Mammary epithelial cell (primary cell): ENCODE measurements at regions of chr3 and their contacts with region 1.

Region 1: DNA sequence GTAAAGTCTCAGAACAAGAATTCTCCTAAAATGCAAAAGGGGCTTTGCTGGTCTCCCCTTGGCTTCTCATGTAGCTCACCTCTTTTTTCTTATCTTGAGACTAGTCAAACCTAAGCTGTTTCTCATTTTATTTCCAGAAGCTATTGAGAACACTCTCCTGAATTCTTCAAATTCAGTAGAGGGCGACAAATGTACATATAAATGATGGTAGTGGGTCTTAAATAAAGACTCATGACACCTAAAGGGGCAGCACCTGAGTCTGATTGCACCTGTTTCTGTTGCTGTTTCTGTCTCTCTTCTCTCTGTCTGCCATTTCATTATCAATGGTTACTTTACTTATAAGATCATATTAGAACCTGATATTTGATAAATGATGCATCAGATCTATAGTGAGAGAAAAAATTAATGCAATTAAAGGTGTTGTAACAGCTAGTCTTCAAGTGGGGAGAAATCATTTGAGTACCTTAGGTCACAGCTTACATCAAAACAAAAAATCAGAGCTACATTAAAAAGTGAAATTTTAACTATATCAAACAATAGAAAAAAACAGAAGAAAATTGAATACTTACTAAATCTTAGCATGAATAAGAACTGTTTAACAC is 7.0 kb downstream of the ADIPOQ start:
- DNase-seq: peak; percentile 45
- H3K4me3 ChIP-seq: no peak overlapping the region
- H3K27ac ChIP-seq: no peak overlapping the region
- H3K4me1 ChIP-seq: no peaks in the 10 kb centered on the region
- H3K27me3 ChIP-seq: peaks cover 2% of the 10 kb centered on the region
- CTCF ChIP-seq: peak; percentile 50 to 54

Region 2: DNA sequence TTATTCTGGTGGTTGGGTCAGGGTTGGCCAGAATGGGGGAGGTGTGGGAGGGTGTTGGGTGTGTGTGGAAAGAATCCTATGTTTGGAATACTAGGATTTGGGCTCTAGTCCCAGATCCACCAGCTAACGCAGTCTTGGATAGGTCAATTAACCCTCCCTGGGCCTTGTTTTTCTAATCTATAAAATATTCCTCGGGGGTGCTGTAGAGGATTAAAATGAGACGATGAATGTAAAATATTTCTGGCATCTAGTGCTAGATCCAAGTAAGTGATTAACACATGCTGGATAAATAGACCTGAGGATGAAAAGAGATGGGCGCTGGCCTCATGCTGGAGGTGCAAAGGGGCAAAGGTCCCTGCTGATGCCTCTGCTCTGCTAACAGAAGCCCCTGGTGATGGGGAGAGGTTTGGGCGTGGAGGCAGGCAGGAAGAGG is 672.9 kb before region 1 on chr3:
- CTCF ChIA-PET with region 1: no interaction called
- dilution Hi-C with region 1: no loop called
- in situ Hi-C with region 1: no loop called
- intact Hi-C with region 1: no loop called
- DNase-seq: no peak
- H3K4me3 ChIP-seq: no peak overlapping the region
- H3K27ac ChIP-seq: no peak overlapping the region
- H3K4me1 ChIP-seq: no peaks in the 10 kb centered on the region
- H3K27me3 ChIP-seq: no peaks in the 10 kb centered on the region
- CTCF ChIP-seq: no peak

Region 3: GRCh38 chr3:186570096-186570940 is 279.2 kb before region 1 on chr3 and contains the start of gene DNAJB11:
- CTCF ChIA-PET with region 1: no interaction called
- dilution Hi-C with region 1: no loop called
- in situ Hi-C with region 1: no loop called
- intact Hi-C with region 1: no loop called
- DNase-seq: peak; percentile 100
- H3K4me3 ChIP-seq: peak within 1 kb of the TSS; percentile 66 to 93 (median 69)
- H3K27ac ChIP-seq: peak within 1 kb of the TSS; percentile 87
- H3K4me1 ChIP-seq: peaks cover 25% of the 10 kb centered on the region
- H3K27me3 ChIP-seq: no peaks in the 10 kb centered on the region
- CTCF ChIP-seq: no peak
- total RNA-seq, gene DNAJB11: 27.0 to 70.8 TPM

Region 4: GRCh38 chr3:186920301-186920700 is 70.8 kb after region 1 on chr3:
- CTCF ChIA-PET with region 1: no interaction called
- dilution Hi-C with region 1: no loop called
- in situ Hi-C with region 1: loop called in 1 of 2 experiments (anchors 10 kb)
- intact Hi-C with region 1: loop called (anchors 2 kb)
- DNase-seq: no peak
- H3K4me3 ChIP-seq: no peak overlapping the region
- H3K27ac ChIP-seq: no peak overlapping the region
- H3K4me1 ChIP-seq: peaks cover 29% of the 10 kb centered on the region
- H3K27me3 ChIP-seq: no peaks in the 10 kb centered on the region
- CTCF ChIP-seq: no peak

Region 5: DNA sequence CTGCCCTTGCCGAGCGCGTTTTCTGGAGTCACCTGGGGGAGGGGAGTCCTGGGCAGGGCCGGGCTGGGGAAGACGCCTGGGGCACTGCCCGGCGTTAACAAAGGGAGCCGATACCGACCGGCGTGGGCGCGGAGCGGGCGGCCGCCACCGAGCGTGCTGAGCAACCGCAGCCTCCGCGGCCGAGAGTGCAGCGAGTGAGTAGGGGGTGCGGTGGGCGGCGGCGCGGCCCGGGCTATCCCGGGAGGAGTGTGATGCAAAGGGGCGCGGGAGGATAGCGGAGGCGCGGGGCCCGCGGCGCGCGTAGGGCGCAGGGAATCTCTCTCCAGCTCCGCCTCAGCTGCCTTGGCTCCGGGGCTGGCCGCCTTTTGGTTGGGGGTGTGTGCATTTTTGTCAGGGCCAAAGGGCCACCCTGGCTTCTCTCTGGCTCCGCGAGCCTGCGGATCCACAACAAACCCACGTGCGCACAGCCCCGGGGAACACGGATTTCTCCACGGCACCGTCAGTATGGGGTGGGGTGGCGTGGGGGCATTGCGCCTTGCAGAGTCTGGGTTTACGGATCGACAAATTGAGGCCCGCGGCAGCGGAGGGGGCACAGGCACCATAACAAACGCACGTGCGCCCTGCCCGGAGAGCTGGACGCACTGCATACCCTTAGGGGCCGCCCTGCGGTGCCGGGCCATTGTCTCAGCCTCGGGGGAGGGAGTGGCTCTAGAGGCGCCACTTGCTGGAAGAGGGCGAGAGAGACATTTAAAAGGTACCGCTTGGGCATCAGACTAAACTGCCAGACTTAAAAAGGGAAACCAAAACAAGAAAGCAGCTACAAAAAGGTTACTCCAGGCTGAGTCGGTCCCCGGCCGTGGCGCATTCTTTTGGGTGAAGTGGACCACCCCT is 81.4 kb after region 1 on chr3:
- CTCF ChIA-PET with region 1: no interaction called
- dilution Hi-C with region 1: no loop called
- in situ Hi-C with region 1: loop called in 1 of 2 experiments (anchors 10 kb)
- intact Hi-C with region 1: loop called (anchors 1 kb)
- DNase-seq: peak; percentile 57
- H3K4me3 ChIP-seq: peak overlapping the region; percentile 86 to 95 (median 89)
- H3K27ac ChIP-seq: peak overlapping the region; percentile 42
- H3K4me1 ChIP-seq: peaks cover 26% of the 10 kb centered on the region
- H3K27me3 ChIP-seq: no peaks in the 10 kb centered on the region
- CTCF ChIP-seq: peak in 1 of 2 donors; percentile 29

Region 6: DNA sequence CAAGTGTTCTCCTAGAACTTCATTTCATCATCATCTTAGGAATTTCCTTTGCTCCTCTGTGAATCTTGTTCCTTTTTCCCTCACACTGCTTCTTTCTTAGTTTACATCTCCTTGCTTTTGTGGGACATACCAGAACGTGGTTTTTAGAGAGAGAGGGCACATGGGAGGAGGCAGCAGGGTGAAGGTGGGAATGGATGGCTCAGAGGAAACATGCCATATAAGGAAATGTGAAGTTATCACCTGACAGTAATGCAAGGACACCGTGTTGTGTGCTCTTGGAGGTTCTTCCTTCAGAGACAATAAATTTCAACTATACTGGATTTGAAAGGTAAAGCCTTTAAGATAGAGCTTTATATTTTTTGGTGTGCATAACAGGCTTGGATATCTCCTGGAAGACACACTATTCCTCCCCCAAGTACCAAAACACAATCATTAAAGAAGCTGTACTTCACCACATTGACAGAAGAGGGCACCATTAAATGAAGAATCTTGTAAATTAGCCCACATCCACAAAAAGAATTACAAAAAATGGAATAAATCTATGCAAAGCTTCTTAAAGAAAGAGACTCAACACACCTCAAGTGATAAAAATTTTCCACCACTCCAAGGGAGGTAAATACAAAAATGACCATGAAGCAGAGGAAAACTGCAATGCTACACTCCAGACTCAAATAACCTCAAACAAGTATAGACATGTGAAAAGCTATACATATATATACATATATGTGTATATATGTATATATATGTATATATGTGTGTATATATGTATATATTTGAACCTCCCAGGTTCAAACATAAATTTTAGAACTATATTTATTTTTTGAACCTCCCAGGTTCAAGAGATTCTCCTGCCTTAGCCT is 263.7 kb after region 1 on chr3:
- CTCF ChIA-PET with region 1: interaction called, 10 read pairs
- dilution Hi-C with region 1: no loop called
- in situ Hi-C with region 1: no loop called
- intact Hi-C with region 1: loop called (anchors 1 kb)
- DNase-seq: peak; percentile 24
- H3K4me3 ChIP-seq: no peak overlapping the region
- H3K27ac ChIP-seq: no peak overlapping the region
- H3K4me1 ChIP-seq: peaks cover 7% of the 10 kb centered on the region
- H3K27me3 ChIP-seq: no peaks in the 10 kb centered on the region
- CTCF ChIP-seq: peak; percentile 48 to 54

Region 7: GRCh38 chr3:187164885-187165543 is 315.5 kb after region 1 on chr3:
- CTCF ChIA-PET with region 1: interaction called, 14 read pairs
- dilution Hi-C with region 1: no loop called
- in situ Hi-C with region 1: loop called in 1 of 2 experiments (anchors 10 kb)
- intact Hi-C with region 1: loop called (anchors 1 kb)
- DNase-seq: peak; percentile 55
- H3K4me3 ChIP-seq: no peak overlapping the region
- H3K27ac ChIP-seq: no peak overlapping the region
- H3K4me1 ChIP-seq: peaks cover 10% of the 10 kb centered on the region
- H3K27me3 ChIP-seq: no peaks in the 10 kb centered on the region
- CTCF ChIP-seq: peak; percentile 60 to 64

Region 8: DNA sequence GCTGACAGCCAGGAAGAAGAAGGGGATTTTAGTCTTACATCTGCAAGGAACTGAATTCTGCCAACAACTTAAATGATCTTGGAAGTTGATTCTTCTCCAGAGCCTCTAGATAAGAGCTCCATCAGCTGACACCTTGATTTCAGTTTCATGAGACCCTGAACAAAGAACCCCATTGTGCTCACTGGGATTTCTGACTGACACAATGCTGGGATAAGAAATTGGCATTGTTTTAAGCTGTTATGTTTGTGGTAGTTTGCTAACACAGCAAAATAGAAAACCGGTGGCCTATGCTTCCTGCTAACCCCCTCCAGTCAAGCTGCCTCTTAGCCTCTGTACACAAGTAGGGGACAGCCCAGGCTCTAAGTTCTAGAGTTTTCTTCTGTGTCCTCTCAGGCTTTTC is 405.8 kb after region 1 on chr3:
- CTCF ChIA-PET with region 1: no interaction called
- dilution Hi-C with region 1: no loop called
- in situ Hi-C with region 1: no loop called
- intact Hi-C with region 1: no loop called
- DNase-seq: no peak
- H3K4me3 ChIP-seq: no peak overlapping the region
- H3K27ac ChIP-seq: no peak overlapping the region
- H3K4me1 ChIP-seq: no peaks in the 10 kb centered on the region
- H3K27me3 ChIP-seq: no peaks in the 10 kb centered on the region
- CTCF ChIP-seq: no peak

Region 9: GRCh38 chr3:187679638-187680396 is 830.3 kb after region 1 on chr3:
- CTCF ChIA-PET with region 1: no interaction called
- dilution Hi-C with region 1: no loop called
- in situ Hi-C with region 1: no loop called
- intact Hi-C with region 1: loop called (anchors 2 kb)
- DNase-seq: peak; percentile 48
- H3K4me3 ChIP-seq: no peak overlapping the region
- H3K27ac ChIP-seq: no peak overlapping the region
- H3K4me1 ChIP-seq: peaks cover 5% of the 10 kb centered on the region
- H3K27me3 ChIP-seq: peaks cover 14% of the 10 kb centered on the region
- CTCF ChIP-seq: peak; percentile 86 to 95

Region 10: DNA sequence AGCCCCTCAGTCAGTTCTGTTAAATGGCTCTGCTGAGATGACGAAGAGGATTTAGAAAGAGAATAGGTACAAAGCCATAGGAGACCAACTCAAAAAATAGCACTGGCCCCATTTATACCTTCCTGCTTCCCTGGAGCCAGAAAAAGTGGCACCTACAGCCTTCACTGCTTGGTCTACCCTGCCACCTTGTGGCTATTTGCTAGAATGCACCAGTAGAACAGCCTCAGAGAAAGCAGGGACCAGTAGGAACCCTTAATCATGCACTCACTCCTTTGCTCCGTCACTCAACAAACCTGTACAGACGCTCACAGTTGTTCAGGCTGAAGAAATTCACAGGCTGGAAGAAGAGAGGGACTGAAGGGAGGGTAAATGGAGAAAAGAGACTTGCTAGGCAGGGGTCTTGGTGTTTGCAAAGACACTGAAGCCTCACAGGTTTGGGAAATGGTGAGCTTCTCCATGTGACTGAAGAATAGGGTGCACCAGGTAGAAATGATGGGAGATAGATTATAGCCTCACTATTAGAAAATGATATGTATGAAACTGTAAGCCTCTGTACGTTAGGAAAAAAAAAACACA is 865.0 kb after region 1 on chr3:
- CTCF ChIA-PET with region 1: no interaction called
- dilution Hi-C with region 1: no loop called
- in situ Hi-C with region 1: no loop called
- intact Hi-C with region 1: loop called (anchors 5 kb)
- DNase-seq: peak; percentile 70
- H3K4me3 ChIP-seq: no peak overlapping the region
- H3K27ac ChIP-seq: no peak overlapping the region
- H3K4me1 ChIP-seq: no peaks in the 10 kb centered on the region
- H3K27me3 ChIP-seq: no peaks in the 10 kb centered on the region
- CTCF ChIP-seq: peak; percentile 96 to 98